ENCODE measurements at regions of chr11 and their contacts with region 1.

Region 1: DNA sequence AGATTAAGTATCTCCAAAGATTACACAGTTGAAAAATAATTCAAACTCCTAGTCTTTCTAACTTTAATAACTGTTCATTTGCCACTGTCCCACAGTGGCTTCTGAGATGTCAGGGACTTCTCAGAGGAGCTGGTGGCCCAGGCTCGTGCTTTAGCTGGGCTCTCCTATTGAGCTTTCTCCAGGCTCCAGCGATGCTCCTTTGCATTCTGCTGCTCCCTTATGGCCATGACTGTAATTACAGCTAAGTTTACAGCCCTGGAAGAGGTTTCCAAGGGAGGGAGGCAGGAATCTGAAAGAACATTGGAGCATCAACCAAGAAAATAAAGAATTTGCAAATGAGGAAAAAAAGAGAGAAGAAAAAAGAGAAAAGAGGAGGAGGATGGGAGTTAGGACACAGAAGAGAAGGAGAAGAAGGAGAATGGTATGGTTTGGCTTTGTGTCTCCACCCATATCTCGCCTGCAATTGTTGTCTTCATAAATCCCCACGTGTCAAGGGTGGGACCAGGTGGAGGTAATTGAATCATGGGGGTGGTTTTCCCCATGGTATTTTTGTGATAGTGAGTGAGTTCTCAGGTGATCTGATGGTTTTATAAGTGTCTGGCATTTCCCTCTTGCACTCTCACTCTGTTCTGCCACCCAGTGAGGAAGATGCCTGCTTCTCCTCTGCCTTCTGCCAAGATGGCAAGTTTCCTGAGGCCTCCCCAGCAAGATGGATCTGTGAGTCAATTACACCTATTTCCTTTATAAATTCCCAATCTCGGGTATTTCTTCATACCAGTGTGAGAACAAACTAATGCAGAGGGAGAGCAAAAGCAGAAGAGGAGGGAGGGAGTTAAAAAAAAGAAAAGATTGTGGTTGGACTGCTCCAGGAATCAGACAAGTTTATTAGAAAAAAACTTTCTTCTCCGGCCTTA is 857.0 kb downstream of the KCNA4 start:
- DNase-seq: peak; percentile 90
- ATAC-seq: peak; percentile 98
- H3K4me3 ChIP-seq: no peak overlapping the region
- H3K27ac ChIP-seq: peak overlapping the region; percentile 89
- H3K4me1 ChIP-seq: peaks cover 9% of the 10 kb centered on the region
- H3K27me3 ChIP-seq: no peaks in the 10 kb centered on the region
- CTCF ChIP-seq: peak; percentile 85
- POLR2A ChIP-seq: peak; percentile 17; the same call in 1 of the 2 replicates
- RAD21 ChIP-seq: peak; percentile 94

Region 2: GRCh38 chr11:27705873-27706820 is 1453.7 kb before region 1 on chr11:
- CTCF ChIA-PET with region 1: no interaction called
- POLR2A ChIA-PET with region 1: no interaction called
- dilution Hi-C with region 1: no loop called
- in situ Hi-C with region 1: loop called (anchors 25 kb)
- intact Hi-C with region 1: no loop called
- DNase-seq: peak; percentile 64
- ATAC-seq: no peak
- H3K4me3 ChIP-seq: no peak overlapping the region
- H3K27ac ChIP-seq: peak overlapping the region; percentile 63; the same call in 1 of the 2 replicates
- H3K4me1 ChIP-seq: peaks cover 8% of the 10 kb centered on the region
- H3K27me3 ChIP-seq: no peaks in the 10 kb centered on the region
- CTCF ChIP-seq: peak; percentile 48
- POLR2A ChIP-seq: no peak
- RAD21 ChIP-seq: peak; percentile 40

Region 3: DNA sequence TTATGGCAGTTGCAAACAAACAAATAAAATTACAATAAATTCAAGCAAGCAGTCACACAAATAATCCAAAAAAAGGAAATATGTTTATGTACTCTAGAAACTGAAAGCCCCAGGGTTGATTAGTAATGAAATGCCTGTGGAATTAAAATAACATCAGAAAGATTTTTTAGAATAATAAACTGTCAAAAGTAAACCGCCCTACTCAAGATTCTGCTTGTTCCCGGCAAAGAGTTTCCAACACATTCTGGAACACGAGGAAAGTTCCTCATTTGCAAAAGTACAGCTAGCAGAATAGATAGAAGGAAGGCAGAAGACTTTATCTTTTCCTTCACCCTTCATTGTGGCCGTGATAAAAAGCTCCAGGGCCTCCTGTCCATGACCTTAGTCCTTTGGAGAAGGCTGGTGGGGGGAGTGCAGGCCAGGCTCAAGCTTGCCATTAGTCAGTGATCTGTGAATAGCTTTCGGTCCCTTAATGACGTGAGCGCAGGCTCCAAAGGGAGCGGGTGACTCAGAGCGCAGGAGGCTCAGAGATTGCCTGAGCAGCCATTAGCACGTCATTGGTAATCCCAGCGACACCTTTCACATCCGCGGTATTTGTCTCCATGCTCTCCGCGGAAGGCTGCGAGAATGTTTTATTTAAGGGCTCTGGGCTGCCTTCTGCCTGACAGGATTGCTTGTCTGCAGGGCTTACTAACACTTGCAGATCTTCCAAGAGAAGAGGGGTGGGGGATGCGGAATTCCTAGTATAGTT is 593.3 kb before region 1 on chr11:
- CTCF ChIA-PET with region 1: no interaction called
- POLR2A ChIA-PET with region 1: no interaction called
- dilution Hi-C with region 1: no loop called
- in situ Hi-C with region 1: no loop called
- intact Hi-C with region 1: loop called (anchors 5 kb)
- DNase-seq: peak; percentile 100
- ATAC-seq: peak; percentile 98
- H3K4me3 ChIP-seq: peak overlapping the region; percentile 3; the same call in 1 of the 2 replicates
- H3K27ac ChIP-seq: peak overlapping the region; percentile 78
- H3K4me1 ChIP-seq: peaks cover 5% of the 10 kb centered on the region
- H3K27me3 ChIP-seq: no peaks in the 10 kb centered on the region
- CTCF ChIP-seq: no peak
- POLR2A ChIP-seq: peak; percentile 13; the same call in 1 of the 2 replicates
- RAD21 ChIP-seq: peak; percentile 40

Region 4: GRCh38 chr11:28963189-28963588 is 196.6 kb before region 1 on chr11:
- CTCF ChIA-PET with region 1: interaction called, 3 read pairs
- POLR2A ChIA-PET with region 1: no interaction called
- dilution Hi-C with region 1: no loop called
- in situ Hi-C with region 1: no loop called
- intact Hi-C with region 1: loop called (anchors 1 kb)
- DNase-seq: peak; percentile 83
- ATAC-seq: peak; percentile 36
- H3K4me3 ChIP-seq: no peak overlapping the region
- H3K27ac ChIP-seq: peak overlapping the region; percentile 87; the same call in 1 of the 2 replicates
- H3K4me1 ChIP-seq: peaks cover 13% of the 10 kb centered on the region
- H3K27me3 ChIP-seq: no peaks in the 10 kb centered on the region
- CTCF ChIP-seq: no peak
- POLR2A ChIP-seq: no peak
- RAD21 ChIP-seq: no peak

Region 5: DNA sequence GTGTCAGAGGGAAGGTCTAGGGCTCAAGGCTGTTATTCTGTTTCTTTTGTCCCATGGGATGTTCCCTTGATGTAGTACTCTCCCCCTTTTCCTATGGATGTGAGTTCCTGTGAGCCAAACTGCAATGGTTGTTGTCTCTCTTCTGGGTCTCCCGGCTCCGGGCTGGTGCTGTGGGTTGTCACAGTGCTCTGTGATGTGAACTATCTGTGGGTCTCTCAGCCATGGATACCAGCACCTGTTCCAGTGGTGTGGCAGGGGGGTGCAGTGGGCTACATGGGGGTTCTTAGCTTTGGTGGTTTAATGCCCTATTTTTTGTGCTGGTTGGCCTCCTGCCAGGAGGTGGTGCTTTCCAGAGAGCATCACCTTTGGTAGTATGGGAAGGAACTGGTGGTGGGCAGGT is 84.1 kb before region 1 on chr11:
- CTCF ChIA-PET with region 1: no interaction called
- POLR2A ChIA-PET with region 1: no interaction called
- dilution Hi-C with region 1: no loop called
- in situ Hi-C with region 1: no loop called
- intact Hi-C with region 1: loop called (anchors 5 kb)
- DNase-seq: no peak
- ATAC-seq: no peak
- H3K4me3 ChIP-seq: no peak overlapping the region
- H3K27ac ChIP-seq: no peak overlapping the region
- H3K4me1 ChIP-seq: no peaks in the 10 kb centered on the region
- H3K27me3 ChIP-seq: no peaks in the 10 kb centered on the region
- CTCF ChIP-seq: no peak
- POLR2A ChIP-seq: no peak
- RAD21 ChIP-seq: no peak

Measured in IMR-90 (cell line).